MCF 10A (cell line): ENCODE measurements at regions of chr7 and their contacts with region 1.

Region 1: GRCh38 chr7:95263785-95264575 is 60.4 kb downstream of the PON1 start:
- DNase-seq: peak; percentile 80
- H3K4me3 Mint-ChIP-seq: peak overlapping the region; percentile 3
- H3K27ac Mint-ChIP-seq: peak overlapping the region; percentile 26
- H3K4me1 Mint-ChIP-seq: peaks cover 12% of the 10 kb centered on the region
- H3K27me3 Mint-ChIP-seq: no peaks in the 10 kb centered on the region
- CTCF ChIP-seq: no peak

Region 2: DNA sequence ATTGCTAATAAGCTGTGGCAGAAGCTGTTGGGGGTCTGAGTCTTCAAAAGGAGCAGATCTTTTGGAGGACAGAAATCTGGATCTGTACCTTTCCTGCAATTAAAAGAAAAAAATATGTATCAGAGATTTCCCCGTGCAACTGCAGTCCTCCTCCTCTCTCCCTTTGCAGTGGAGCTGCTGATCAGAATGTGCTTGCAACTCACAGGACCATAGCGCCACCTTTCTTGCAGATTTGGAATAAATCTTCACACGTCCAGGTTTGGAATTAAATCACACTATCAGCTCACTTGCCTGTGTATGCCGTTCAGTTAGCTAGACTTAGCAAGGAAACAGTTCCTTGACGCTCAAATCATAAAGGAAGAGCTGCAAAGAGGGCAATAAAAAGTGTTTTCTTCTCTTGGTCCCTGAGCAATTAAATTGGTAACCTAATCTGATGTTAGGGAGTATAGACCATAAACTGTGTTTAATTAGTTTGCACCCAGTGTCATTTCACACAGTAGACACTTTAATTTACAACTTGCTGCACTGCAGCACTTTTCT is 17.1 kb before region 1 on chr7:
- CTCF ChIA-PET with region 1: interaction called, 14 read pairs
- POLR2A ChIA-PET with region 1: no interaction called
- intact Hi-C with region 1: no loop called
- DNase-seq: peak; percentile 79
- H3K4me3 Mint-ChIP-seq: no peak overlapping the region
- H3K27ac Mint-ChIP-seq: no peak overlapping the region
- H3K4me1 Mint-ChIP-seq: no peaks in the 10 kb centered on the region
- H3K27me3 Mint-ChIP-seq: no peaks in the 10 kb centered on the region
- CTCF ChIP-seq: peak; percentile 65